Endothelial cell of umbilical vein (primary cell): ENCODE measurements at regions of chr1 and their contacts with region 1.

Region 1: DNA sequence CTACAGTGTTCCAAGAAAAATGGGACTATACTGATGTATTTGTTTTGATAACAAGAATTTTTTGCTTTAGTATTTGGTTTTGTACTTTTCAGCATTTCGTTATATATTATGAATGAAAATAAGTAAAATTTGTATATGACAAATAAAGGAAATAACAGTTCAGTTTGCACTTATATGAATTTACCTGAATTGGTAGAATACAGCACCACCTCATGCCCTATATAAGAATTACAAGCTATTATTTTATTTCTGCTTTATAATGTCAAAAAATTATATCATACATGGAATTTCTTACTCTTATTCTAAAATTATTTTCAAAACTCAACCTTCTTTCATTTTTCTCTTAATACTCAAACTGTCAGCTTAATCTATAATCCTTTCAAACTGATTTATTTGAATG is 14.6 kb downstream of the EFCAB7 start:
- DNase-seq: peak; percentile 24
- H3K4me3 ChIP-seq: no peak overlapping the region
- H3K27ac ChIP-seq: no peak overlapping the region
- H3K4me1 ChIP-seq: no peaks in the 10 kb centered on the region
- H3K27me3 ChIP-seq: no peaks in the 10 kb centered on the region
- CTCF ChIP-seq: peak; percentile 12 to 20
- POLR2A ChIP-seq: no peak

Region 2: GRCh38 chr1:62841587-62842169 is 696.3 kb before region 1 on chr1:
- CTCF ChIA-PET with region 1: interaction called, 26 read pairs
- POLR2A ChIA-PET with region 1: no interaction called
- dilution Hi-C with region 1: no loop called
- intact Hi-C with region 1: loop called (anchors 5 kb)
- DNase-seq: peak; percentile 70
- H3K4me3 ChIP-seq: no peak overlapping the region
- H3K27ac ChIP-seq: no peak overlapping the region
- H3K4me1 ChIP-seq: no peaks in the 10 kb centered on the region
- H3K27me3 ChIP-seq: no peaks in the 10 kb centered on the region
- CTCF ChIP-seq: peak; percentile 35 to 37
- POLR2A ChIP-seq: no peak

Region 3: GRCh38 chr1:62962901-62963776 is 574.8 kb before region 1 on chr1:
- CTCF ChIA-PET with region 1: interaction called, 6 read pairs
- POLR2A ChIA-PET with region 1: no interaction called
- dilution Hi-C with region 1: no loop called
- intact Hi-C with region 1: loop called (anchors 5 kb)
- DNase-seq: peak; percentile 29
- H3K4me3 ChIP-seq: no peak overlapping the region
- H3K27ac ChIP-seq: no peak overlapping the region
- H3K4me1 ChIP-seq: no peaks in the 10 kb centered on the region
- H3K27me3 ChIP-seq: no peaks in the 10 kb centered on the region
- CTCF ChIP-seq: peak; percentile 51 to 67
- POLR2A ChIP-seq: no peak

Region 4: DNA sequence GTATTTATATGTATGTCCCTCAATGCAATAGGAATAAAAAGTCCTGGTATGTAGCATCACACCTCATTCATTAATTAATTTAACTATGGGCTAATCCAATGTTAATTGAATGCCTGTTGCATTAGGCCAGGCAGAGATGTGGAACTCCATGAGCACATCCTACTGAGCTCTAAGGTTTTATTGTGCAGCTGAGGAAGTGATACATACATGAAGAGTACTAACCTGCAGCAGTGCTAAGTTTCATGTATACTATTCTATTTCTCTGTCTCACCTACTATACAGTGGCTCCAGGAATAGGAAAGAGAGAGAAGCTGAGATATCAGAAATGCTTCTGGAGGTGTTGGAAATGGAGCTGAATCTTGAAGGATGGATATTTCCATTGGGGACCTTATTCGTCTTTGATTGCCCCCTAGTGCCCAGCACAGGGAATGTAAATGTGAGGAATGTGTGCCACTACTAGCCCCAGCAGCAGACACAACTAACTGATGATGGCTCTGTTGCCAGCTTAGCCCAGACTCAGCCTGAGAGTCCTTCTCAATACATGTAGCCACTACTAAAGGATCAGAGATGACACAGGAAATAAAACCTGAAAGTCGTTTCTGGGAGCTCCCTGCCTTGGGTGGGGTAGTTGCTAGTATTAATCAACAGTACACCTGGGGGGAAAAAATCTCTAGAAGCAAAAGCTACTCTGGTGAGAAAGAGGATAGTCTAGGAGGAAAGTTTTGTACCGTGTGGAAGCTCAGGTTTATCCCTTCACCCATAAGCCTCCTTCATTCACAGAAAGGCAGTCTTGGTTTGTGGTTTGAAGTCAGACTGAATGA is 388.9 kb before region 1 on chr1:
- CTCF ChIA-PET with region 1: interaction called, 10 read pairs
- POLR2A ChIA-PET with region 1: no interaction called
- dilution Hi-C with region 1: no loop called
- intact Hi-C with region 1: loop called (anchors 1 kb)
- DNase-seq: peak; percentile 40
- H3K4me3 ChIP-seq: no peak overlapping the region
- H3K27ac ChIP-seq: no peak overlapping the region
- H3K4me1 ChIP-seq: no peaks in the 10 kb centered on the region
- H3K27me3 ChIP-seq: peaks cover 6 to 8% of the 10 kb centered on the region in 2 experiments
- CTCF ChIP-seq: peak; percentile 65 to 66
- POLR2A ChIP-seq: no peak

Region 5: DNA sequence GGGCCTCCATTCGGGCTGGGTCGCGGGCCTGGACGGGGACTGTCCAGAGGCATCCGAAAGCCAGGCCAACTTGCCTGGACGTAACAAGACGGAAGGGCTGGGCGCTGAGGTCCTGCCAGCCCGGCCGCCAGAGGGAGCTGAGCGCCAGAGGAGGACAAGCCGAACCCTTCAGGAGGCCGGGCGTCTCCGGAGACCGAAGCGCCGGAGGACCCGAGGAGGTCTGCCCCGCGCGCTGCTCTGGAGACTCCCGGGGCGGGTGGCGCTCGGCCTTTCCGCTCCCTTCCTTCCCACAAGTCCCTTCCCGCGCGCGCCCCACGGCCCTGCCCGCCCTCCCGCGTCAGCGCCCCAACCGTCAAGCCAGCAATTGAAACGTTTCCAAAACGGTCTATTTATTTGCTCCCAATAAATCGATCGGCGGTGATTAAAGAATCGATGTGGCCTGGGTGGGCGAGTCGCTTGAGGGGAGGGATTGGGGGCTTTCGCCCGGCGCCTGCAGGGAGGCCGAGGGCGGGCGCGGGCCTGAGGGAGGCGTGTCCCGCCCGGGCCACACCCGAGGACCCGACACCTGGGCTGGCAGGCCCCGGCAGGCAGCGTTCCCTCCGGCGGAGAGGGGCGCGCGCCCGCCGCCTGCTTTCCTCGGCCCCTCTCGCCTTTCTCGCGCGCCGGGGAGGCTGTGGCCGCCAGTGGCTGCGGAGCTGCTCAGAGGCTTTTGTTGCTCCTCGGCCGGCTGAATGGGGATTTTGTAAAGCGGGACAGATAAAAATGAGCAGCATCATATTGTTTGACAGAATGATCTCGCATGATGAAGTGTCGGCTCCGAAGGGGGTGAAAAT is 220.7 kb before region 1 on chr1:
- CTCF ChIA-PET with region 1: interaction called, 28 read pairs
- POLR2A ChIA-PET with region 1: no interaction called
- dilution Hi-C with region 1: no loop called
- intact Hi-C with region 1: no loop called
- DNase-seq: peak; percentile 54
- H3K4me3 ChIP-seq: peak overlapping the region in 1 of 3 experiments; percentile 21
- H3K27ac ChIP-seq: no peak overlapping the region
- H3K4me1 ChIP-seq: peaks cover 2% of the 10 kb centered on the region
- H3K27me3 ChIP-seq: peaks cover 65 to 72% of the 10 kb centered on the region in 2 experiments
- CTCF ChIP-seq: peak; percentile 57 to 79
- POLR2A ChIP-seq: no peak

Region 6: DNA sequence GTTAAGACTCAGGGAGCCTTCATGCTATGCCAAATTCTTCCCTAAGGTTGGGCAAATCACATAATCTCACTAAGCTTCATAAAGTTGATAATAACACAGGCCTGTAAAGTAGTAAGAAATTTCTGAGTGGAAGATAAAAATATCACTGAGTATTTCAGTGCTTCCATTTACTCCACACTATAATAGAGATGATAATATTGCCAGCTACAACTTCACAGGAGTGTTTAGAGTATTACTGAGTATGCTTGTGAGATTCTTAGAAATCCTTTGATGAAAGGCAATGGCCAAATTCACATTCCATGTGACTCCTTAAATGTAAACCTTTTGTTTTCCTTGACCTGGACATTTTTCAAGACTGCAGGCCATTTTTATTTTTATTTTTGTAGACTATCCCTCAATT is 25.4 kb before region 1 on chr1:
- CTCF ChIA-PET with region 1: interaction called, 13 read pairs
- POLR2A ChIA-PET with region 1: no interaction called
- dilution Hi-C with region 1: no loop called
- intact Hi-C with region 1: no loop called
- DNase-seq: no peak
- H3K4me3 ChIP-seq: no peak overlapping the region
- H3K27ac ChIP-seq: no peak overlapping the region
- H3K4me1 ChIP-seq: no peaks in the 10 kb centered on the region
- H3K27me3 ChIP-seq: no peaks in the 10 kb centered on the region
- CTCF ChIP-seq: no peak
- POLR2A ChIP-seq: no peak

Region 7: GRCh38 chr1:63557365-63557987 is 19.5 kb after region 1 on chr1:
- CTCF ChIA-PET with region 1: interaction called, 54 read pairs
- POLR2A ChIA-PET with region 1: no interaction called
- dilution Hi-C with region 1: no loop called
- intact Hi-C with region 1: no loop called
- DNase-seq: peak; percentile 52
- H3K4me3 ChIP-seq: no peak overlapping the region
- H3K27ac ChIP-seq: no peak overlapping the region
- H3K4me1 ChIP-seq: no peaks in the 10 kb centered on the region
- H3K27me3 ChIP-seq: no peaks in the 10 kb centered on the region
- CTCF ChIP-seq: peak; percentile 53 to 58
- POLR2A ChIP-seq: no peak